Activated naive CD4-positive, alpha-beta T cell treated with anti-CD3 and anti-CD28 coated beads for 36 hours (primary cell): ENCODE measurements at regions of chr15 and their contacts with region 1.

Region 1: GRCh38 chr15:64010719-64011118 is 35.6 kb downstream of the DAPK2 start:
- DNase-seq: peak; percentile 85
- H3K4me3 Mint-ChIP-seq: no peak overlapping the region
- H3K27ac Mint-ChIP-seq: peak overlapping the region; percentile 66
- H3K4me1 Mint-ChIP-seq: peaks cover 28% of the 10 kb centered on the region
- H3K27me3 Mint-ChIP-seq: no peaks in the 10 kb centered on the region

Region 2: GRCh38 chr15:63970621-63971426 is 39.9 kb before region 1 on chr15:
- CTCF ChIA-PET with region 1: no interaction called
- intact Hi-C with region 1: loop called (anchors 2 kb)
- DNase-seq: peak; percentile 42
- H3K4me3 Mint-ChIP-seq: no peak overlapping the region
- H3K27ac Mint-ChIP-seq: peak overlapping the region; percentile 32
- H3K4me1 Mint-ChIP-seq: peaks cover 22% of the 10 kb centered on the region
- H3K27me3 Mint-ChIP-seq: no peaks in the 10 kb centered on the region

Region 3: DNA sequence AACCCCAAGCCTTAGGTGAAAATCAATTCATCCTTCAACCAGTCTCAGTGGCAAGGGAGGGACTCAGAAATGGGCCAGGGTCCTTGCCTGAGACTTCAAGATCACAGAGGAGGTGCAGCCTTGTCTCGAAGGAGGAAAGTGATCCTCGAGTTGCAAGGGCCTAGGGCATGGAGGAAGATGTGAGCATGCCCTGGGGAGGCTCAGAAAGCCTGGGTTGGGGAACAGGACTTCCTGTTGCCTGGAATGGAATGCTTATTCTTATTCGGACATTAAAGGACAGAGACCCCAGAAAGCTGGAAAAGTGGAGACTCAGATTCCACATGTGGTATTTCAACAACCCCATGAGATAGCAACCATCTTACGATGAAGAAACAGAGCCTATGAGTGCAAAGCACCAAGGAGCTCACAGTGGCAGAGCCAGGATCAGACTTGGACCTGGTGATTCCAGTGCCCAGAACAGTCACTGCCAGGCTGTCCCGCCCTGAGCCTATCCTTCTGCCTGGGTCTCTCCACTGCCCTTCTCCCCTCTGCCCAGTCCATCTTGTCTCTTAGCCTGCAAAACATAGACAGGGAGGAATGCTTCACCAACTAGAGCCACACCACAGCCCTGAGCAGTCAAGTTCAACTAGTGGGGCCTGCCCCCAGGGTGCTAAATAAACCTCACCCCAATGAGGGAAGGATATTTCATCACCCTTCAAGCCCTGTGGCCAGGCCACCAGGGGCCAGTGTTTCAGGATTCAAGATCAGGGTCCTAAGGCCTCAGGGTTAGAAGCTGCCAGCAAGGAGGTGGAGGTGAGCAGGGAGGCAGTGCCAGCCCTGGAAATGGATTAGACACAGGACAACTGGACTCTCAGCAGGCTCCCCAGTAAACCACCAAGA is 13.7 kb after region 1 on chr15:
- CTCF ChIA-PET with region 1: no interaction called
- intact Hi-C with region 1: no loop called
- DNase-seq: no peak
- H3K4me3 Mint-ChIP-seq: no peak overlapping the region
- H3K27ac Mint-ChIP-seq: no peak overlapping the region
- H3K4me1 Mint-ChIP-seq: no peaks in the 10 kb centered on the region
- H3K27me3 Mint-ChIP-seq: no peaks in the 10 kb centered on the region